ENCODE measurements at regions of chr22 and their contacts with region 1.

Region 1: GRCh38 chr22:41608386-41608785 is 12.5 kb downstream of the DESI1 start:
- DNase-seq: no peak
- H3K4me3 ChIP-seq: no peak overlapping the region
- H3K27ac ChIP-seq: no peak overlapping the region
- H3K4me1 ChIP-seq: peaks cover 12% of the 10 kb centered on the region
- H3K27me3 ChIP-seq: no peaks in the 10 kb centered on the region
- CTCF ChIP-seq: no peak

Region 2: GRCh38 chr22:41501209-41501608 is 107.2 kb before region 1 on chr22:
- CTCF ChIA-PET with region 1: no interaction called
- dilution Hi-C with region 1: loop called (anchors 5 kb)
- in situ Hi-C with region 1: no loop called
- intact Hi-C with region 1: no loop called
- DNase-seq: no peak
- H3K4me3 ChIP-seq: no peak overlapping the region
- H3K27ac ChIP-seq: no peak overlapping the region
- H3K4me1 ChIP-seq: peaks cover 4% of the 10 kb centered on the region
- H3K27me3 ChIP-seq: no peaks in the 10 kb centered on the region
- CTCF ChIP-seq: peak in 1 of 2 donors; percentile 38

Region 3: GRCh38 chr22:41517172-41518047 is 91.0 kb before region 1 on chr22:
- CTCF ChIA-PET with region 1: no interaction called
- dilution Hi-C with region 1: no loop called
- in situ Hi-C with region 1: no loop called
- intact Hi-C with region 1: no loop called
- DNase-seq: peak; percentile 78
- H3K4me3 ChIP-seq: no peak overlapping the region
- H3K27ac ChIP-seq: peak overlapping the region; percentile 6
- H3K4me1 ChIP-seq: peaks cover 22% of the 10 kb centered on the region
- H3K27me3 ChIP-seq: no peaks in the 10 kb centered on the region
- CTCF ChIP-seq: peak; percentile 94 to 95

Region 4: GRCh38 chr22:41563051-41563711 is 45.2 kb before region 1 on chr22:
- CTCF ChIA-PET with region 1: no interaction called
- dilution Hi-C with region 1: loop called (anchors 5 kb)
- in situ Hi-C with region 1: no loop called
- intact Hi-C with region 1: no loop called
- DNase-seq: peak; percentile 30
- H3K4me3 ChIP-seq: no peak overlapping the region
- H3K27ac ChIP-seq: no peak overlapping the region
- H3K4me1 ChIP-seq: peaks cover 15% of the 10 kb centered on the region
- H3K27me3 ChIP-seq: no peaks in the 10 kb centered on the region
- CTCF ChIP-seq: no peak

Region 5: GRCh38 chr22:41656556-41656955 is 48.2 kb after region 1 on chr22:
- CTCF ChIA-PET with region 1: no interaction called
- dilution Hi-C with region 1: loop called (anchors 5 kb)
- in situ Hi-C with region 1: no loop called
- intact Hi-C with region 1: no loop called
- DNase-seq: no peak
- H3K4me3 ChIP-seq: no peak overlapping the region
- H3K27ac ChIP-seq: no peak overlapping the region
- H3K4me1 ChIP-seq: no peaks in the 10 kb centered on the region
- H3K27me3 ChIP-seq: no peaks in the 10 kb centered on the region
- CTCF ChIP-seq: no peak